ENCODE measurements at regions of chr1 and their contacts with region 1.

Region 1: DNA sequence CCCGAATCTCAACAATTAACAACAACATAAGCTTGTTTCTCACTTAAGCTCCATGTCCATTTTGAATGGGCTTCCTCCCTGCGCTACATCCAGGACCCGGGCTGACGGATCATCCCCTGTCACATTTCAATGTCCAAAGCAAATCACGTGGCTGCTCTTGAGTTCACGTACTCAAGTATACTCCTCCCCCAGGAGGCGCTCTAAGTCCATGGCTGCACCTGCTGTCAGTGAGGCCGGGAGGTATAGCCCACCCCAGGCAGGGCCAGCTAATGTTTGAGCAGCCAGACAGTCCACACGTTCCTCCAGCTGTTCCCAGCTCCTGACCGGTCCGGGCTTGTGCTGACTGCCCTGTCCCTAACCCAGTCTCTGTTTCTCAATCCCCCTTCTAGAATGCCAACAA is 220.8 kb downstream of the SLC35F3 start:
- DNase-seq: peak; percentile 73
- ATAC-seq: peak; percentile 73
- H3K4me3 Mint-ChIP-seq: no peak overlapping the region
- H3K27ac Mint-ChIP-seq: no peak overlapping the region
- H3K4me1 Mint-ChIP-seq: no peaks in the 10 kb centered on the region
- H3K27me3 Mint-ChIP-seq: peaks cover 30% of the 10 kb centered on the region

Region 2: DNA sequence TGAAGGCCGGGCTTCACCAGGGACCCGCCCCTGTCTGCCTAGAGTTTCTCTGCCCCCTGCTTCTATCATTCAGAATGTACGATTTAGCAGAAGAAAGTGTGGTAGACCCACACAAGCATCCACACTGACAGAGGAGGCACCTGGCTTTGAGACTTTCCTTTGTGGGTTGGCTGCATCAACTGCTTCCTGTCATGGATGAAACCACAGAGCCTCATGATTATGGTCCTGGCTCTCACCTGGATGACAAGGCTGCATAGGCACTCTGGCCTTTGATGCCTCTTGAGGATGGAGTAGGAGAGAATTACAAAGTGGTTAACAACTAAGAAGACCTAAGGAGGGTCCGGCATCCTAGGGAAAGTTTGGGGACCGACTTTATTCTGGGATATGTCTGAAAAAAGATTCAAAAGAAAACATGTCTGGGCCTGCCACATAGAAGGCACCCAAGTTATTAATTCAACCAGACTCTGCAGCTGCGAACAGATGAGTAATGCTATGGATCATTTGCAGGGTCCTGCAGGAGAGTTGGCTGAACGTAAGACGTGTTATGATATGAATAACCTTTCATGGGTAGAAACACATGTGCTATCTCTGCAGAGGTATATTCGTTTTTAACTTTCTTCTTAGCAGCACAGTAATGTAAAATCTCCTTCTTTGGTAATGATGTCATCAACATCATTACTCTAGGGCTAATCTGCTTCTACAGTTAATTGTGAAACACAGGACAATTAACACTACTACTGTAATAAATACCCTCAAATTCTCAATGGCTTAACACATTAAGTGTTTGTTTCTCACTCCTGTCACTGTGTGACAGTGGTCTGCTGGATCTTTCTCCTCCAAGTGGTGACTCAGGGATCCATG is 84.6 kb before region 1 on chr1:
- CTCF ChIA-PET with region 1: no interaction called
- POLR2A ChIA-PET with region 1: no interaction called
- DNase-seq: no peak
- ATAC-seq: no peak
- H3K4me3 Mint-ChIP-seq: no peak overlapping the region
- H3K27ac Mint-ChIP-seq: no peak overlapping the region
- H3K4me1 Mint-ChIP-seq: no peaks in the 10 kb centered on the region
- H3K27me3 Mint-ChIP-seq: peaks cover 13% of the 10 kb centered on the region

Region 3: GRCh38 chr1:234114648-234115307 is 10.5 kb before region 1 on chr1:
- CTCF ChIA-PET with region 1: interaction called, 20 read pairs
- POLR2A ChIA-PET with region 1: no interaction called
- DNase-seq: peak; percentile 54
- ATAC-seq: peak; percentile 71
- H3K4me3 Mint-ChIP-seq: peak overlapping the region; percentile 49
- H3K27ac Mint-ChIP-seq: no peak overlapping the region
- H3K4me1 Mint-ChIP-seq: peaks cover 6% of the 10 kb centered on the region
- H3K27me3 Mint-ChIP-seq: peaks cover 31% of the 10 kb centered on the region

Region 4: DNA sequence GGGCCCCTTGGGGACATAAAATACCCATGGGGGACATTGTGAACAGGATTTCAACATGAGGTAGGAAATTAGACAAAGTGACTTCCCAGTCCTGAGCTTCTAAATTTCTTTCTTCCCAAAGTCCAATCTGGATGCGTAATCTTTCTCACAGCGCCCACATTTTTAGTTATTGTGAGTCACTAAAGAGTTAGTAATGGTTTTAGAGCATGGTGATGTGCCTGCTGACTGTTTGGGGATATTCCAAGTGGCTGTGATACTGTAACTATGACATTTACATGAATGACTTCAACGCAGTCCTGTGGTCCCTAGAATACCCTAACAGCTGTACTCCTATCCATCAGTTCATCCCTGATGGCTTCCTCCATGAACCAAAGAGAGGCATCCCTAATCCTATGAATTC is 23.9 kb after region 1 on chr1:
- CTCF ChIA-PET with region 1: no interaction called
- POLR2A ChIA-PET with region 1: no interaction called
- DNase-seq: no peak
- ATAC-seq: no peak
- H3K4me3 Mint-ChIP-seq: no peak overlapping the region
- H3K27ac Mint-ChIP-seq: no peak overlapping the region
- H3K4me1 Mint-ChIP-seq: no peaks in the 10 kb centered on the region
- H3K27me3 Mint-ChIP-seq: peaks cover 41% of the 10 kb centered on the region